Endothelial cell of umbilical vein (primary cell): ENCODE measurements at regions of chr2 and their contacts with region 1.

Region 1: DNA sequence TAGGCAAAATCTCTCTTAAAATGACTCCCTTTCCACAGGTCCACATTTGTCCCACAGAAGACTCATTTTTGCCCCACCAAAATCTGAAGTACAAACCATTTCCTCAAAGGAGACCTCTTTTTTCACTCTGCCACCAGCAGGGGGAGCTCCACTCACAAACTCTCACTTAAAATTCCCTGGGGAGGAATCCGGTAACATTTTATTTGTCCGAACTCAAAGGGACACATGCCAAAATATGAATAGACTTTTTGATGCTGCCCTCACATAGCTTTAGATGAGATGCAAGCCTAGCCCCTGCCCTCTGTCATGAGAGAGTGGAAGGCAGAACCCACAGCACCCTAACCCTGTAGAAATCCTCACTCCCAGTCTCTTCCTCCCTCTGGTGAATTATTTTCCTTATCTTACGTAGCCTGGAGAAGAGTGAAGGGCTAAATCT is 57.1 kb downstream of the RMDN2 start:
- DNase-seq: peak; percentile 60
- H3K4me3 ChIP-seq: no peak overlapping the region
- H3K27ac ChIP-seq: no peak overlapping the region
- H3K4me1 ChIP-seq: no peaks in the 10 kb centered on the region
- H3K27me3 ChIP-seq: no peaks in the 10 kb centered on the region
- CTCF ChIP-seq: peak; percentile 71 to 80
- POLR2A ChIP-seq: no peak

Region 2: DNA sequence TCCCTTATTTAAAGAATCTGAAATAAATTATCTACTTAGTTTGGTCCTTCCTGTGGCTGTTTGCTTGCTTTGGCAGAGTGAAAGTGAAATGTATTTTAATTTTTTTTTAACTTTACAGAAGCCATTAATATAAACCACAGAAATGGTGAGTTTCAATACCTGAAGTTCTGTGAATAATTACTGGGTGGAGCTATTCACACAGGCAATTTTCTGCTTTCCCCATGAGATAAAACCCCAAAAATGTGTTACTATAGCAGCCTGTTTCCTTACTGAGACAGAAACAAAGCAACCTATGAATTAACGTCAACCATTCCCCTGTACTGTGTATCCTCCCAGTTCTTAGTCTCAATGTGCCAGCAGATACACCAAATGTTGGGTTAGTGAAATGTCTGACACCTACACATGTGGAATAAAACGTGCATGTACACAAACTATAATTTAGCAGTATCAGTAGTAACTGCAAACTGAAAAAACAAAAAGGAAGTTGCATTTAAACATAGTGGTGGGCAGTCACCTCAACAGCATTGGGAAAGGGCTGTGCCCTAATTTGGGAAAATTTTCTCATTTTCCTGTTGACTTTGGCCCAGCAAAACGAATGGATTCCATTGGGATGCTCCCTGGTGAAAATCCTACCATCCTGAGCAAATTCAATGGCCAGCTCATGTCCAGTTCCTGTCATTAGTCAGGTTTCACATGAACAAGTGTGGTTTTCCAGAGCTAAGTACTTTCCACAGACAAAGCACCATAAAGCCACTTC is 130.2 kb before region 1 on chr2:
- CTCF ChIA-PET with region 1: no interaction called
- POLR2A ChIA-PET with region 1: no interaction called
- dilution Hi-C with region 1: no loop called
- intact Hi-C with region 1: no loop called
- DNase-seq: no peak
- H3K4me3 ChIP-seq: no peak overlapping the region
- H3K27ac ChIP-seq: no peak overlapping the region
- H3K4me1 ChIP-seq: peaks cover 41% of the 10 kb centered on the region
- H3K27me3 ChIP-seq: no peaks in the 10 kb centered on the region
- CTCF ChIP-seq: no peak
- POLR2A ChIP-seq: no peak

Region 3: GRCh38 chr2:37862620-37863019 is 119.5 kb before region 1 on chr2:
- CTCF ChIA-PET with region 1: no interaction called
- POLR2A ChIA-PET with region 1: no interaction called
- dilution Hi-C with region 1: no loop called
- intact Hi-C with region 1: no loop called
- DNase-seq: no peak
- H3K4me3 ChIP-seq: no peak overlapping the region
- H3K27ac ChIP-seq: no peak overlapping the region
- H3K4me1 ChIP-seq: no peaks in the 10 kb centered on the region
- H3K27me3 ChIP-seq: no peaks in the 10 kb centered on the region
- CTCF ChIP-seq: no peak
- POLR2A ChIP-seq: no peak

Region 4: GRCh38 chr2:37993143-37993542 is 11.0 kb after region 1 on chr2:
- CTCF ChIA-PET with region 1: interaction called, 35 read pairs
- POLR2A ChIA-PET with region 1: no interaction called
- dilution Hi-C with region 1: no loop called
- intact Hi-C with region 1: no loop called
- DNase-seq: no peak
- H3K4me3 ChIP-seq: no peak overlapping the region
- H3K27ac ChIP-seq: no peak overlapping the region
- H3K4me1 ChIP-seq: no peaks in the 10 kb centered on the region
- H3K27me3 ChIP-seq: no peaks in the 10 kb centered on the region
- CTCF ChIP-seq: no peak
- POLR2A ChIP-seq: no peak

Region 5: GRCh38 chr2:38000485-38001222 is 18.5 kb after region 1 on chr2:
- CTCF ChIA-PET with region 1: interaction called, 10 read pairs
- POLR2A ChIA-PET with region 1: no interaction called
- dilution Hi-C with region 1: no loop called
- intact Hi-C with region 1: no loop called
- DNase-seq: no peak
- H3K4me3 ChIP-seq: no peak overlapping the region
- H3K27ac ChIP-seq: no peak overlapping the region
- H3K4me1 ChIP-seq: no peaks in the 10 kb centered on the region
- H3K27me3 ChIP-seq: no peaks in the 10 kb centered on the region
- CTCF ChIP-seq: no peak
- POLR2A ChIP-seq: no peak

Region 6: GRCh38 chr2:38115216-38116032 is 133.3 kb after region 1 on chr2:
- CTCF ChIA-PET with region 1: interaction called, 11 read pairs
- POLR2A ChIA-PET with region 1: no interaction called
- dilution Hi-C with region 1: no loop called
- intact Hi-C with region 1: loop called (anchors 1 kb)
- DNase-seq: peak; percentile 73
- H3K4me3 ChIP-seq: no peak overlapping the region
- H3K27ac ChIP-seq: no peak overlapping the region
- H3K4me1 ChIP-seq: no peaks in the 10 kb centered on the region
- H3K27me3 ChIP-seq: peaks cover 0 to 10% of the 10 kb centered on the region in 2 experiments
- CTCF ChIP-seq: peak; percentile 91 to 98
- POLR2A ChIP-seq: no peak

Region 7: GRCh38 chr2:38129987-38130386 is 147.8 kb after region 1 on chr2:
- CTCF ChIA-PET with region 1: no interaction called
- POLR2A ChIA-PET with region 1: no interaction called
- dilution Hi-C with region 1: no loop called
- intact Hi-C with region 1: no loop called
- DNase-seq: no peak
- H3K4me3 ChIP-seq: no peak overlapping the region
- H3K27ac ChIP-seq: no peak overlapping the region
- H3K4me1 ChIP-seq: no peaks in the 10 kb centered on the region
- H3K27me3 ChIP-seq: peaks cover 0 to 3% of the 10 kb centered on the region in 2 experiments
- CTCF ChIP-seq: no peak
- POLR2A ChIP-seq: no peak

Region 8: GRCh38 chr2:38268691-38269309 is 286.6 kb after region 1 on chr2:
- CTCF ChIA-PET with region 1: interaction called, 14 read pairs
- POLR2A ChIA-PET with region 1: no interaction called
- dilution Hi-C with region 1: no loop called
- intact Hi-C with region 1: no loop called
- DNase-seq: no peak
- H3K4me3 ChIP-seq: no peak overlapping the region
- H3K27ac ChIP-seq: no peak overlapping the region
- H3K4me1 ChIP-seq: no peaks in the 10 kb centered on the region
- H3K27me3 ChIP-seq: no peaks in the 10 kb centered on the region
- CTCF ChIP-seq: no peak
- POLR2A ChIP-seq: no peak

Region 9: DNA sequence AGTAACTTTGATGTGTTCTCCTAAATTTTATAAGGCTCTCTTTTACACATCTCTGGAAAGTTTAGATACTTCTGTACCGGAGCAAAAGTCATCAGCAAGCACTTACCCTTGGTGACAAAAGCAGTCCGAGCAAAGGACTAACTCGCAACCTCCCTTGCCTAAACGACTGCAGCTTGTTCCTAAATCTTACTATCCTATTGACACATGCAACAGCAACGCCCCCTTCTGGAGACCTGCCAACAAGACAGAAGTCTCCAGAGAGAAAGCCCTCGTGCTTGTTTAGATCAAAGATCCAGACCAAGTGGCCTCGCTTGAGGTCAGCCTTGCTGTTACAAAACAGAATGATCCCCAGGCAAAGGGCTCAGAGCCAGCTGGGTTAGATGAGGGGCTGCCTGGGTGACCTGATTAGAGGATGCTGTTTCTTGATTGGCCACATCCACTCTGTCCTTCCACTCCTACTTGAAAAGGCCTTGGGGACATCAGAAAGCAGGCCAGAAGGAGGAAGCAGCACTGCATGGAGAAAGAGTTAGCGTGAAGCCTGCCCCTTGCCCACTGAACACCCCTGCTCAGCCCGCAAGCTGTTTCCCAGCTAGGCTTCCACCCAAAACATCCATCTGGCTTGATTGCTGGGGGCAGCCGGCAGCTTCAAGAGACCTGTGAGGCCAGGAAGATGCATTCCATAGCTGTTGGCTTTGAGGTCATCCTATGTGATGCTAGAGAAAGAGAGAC is 526.3 kb after region 1 on chr2:
- CTCF ChIA-PET with region 1: interaction called, 7 read pairs
- POLR2A ChIA-PET with region 1: no interaction called
- dilution Hi-C with region 1: no loop called
- intact Hi-C with region 1: loop called (anchors 2 kb)
- DNase-seq: peak; percentile 79
- H3K4me3 ChIP-seq: no peak overlapping the region
- H3K27ac ChIP-seq: no peak overlapping the region
- H3K4me1 ChIP-seq: peaks cover 3% of the 10 kb centered on the region
- H3K27me3 ChIP-seq: peaks cover 0 to 4% of the 10 kb centered on the region in 2 experiments
- CTCF ChIP-seq: peak; percentile 59 to 61
- POLR2A ChIP-seq: no peak